ENCODE measurements at regions of chr6 and their contacts with region 1.

Region 1: GRCh38 chr6:3742426-3743344 is 8.8 kb downstream of the PXDC1 start:
- DNase-seq: peak; percentile 73 to 92 (median 85)
- ATAC-seq: peak; percentile 94
- H3K4me3 ChIP-seq: no peak overlapping the region
- H3K4me3 Mint-ChIP-seq: peak overlapping the region; percentile 26 to 73 (median 58)
- H3K27ac ChIP-seq: no peak overlapping the region
- H3K27ac Mint-ChIP-seq: peak overlapping the region in 7 of 9 donors; percentile 2 to 81 (median 38)
- H3K4me1 ChIP-seq: peaks cover 0 to 5% of the 10 kb centered on the region in 2 donors
- H3K4me1 Mint-ChIP-seq: peaks cover 0 to 14% (median 12%) of the 10 kb centered on the region in 7 donors
- H3K27me3 ChIP-seq: no peaks in the 10 kb centered on the region
- H3K27me3 Mint-ChIP-seq: peaks cover 11 to 29% (median 17%) of the 10 kb centered on the region in 5 donors

Region 2: DNA sequence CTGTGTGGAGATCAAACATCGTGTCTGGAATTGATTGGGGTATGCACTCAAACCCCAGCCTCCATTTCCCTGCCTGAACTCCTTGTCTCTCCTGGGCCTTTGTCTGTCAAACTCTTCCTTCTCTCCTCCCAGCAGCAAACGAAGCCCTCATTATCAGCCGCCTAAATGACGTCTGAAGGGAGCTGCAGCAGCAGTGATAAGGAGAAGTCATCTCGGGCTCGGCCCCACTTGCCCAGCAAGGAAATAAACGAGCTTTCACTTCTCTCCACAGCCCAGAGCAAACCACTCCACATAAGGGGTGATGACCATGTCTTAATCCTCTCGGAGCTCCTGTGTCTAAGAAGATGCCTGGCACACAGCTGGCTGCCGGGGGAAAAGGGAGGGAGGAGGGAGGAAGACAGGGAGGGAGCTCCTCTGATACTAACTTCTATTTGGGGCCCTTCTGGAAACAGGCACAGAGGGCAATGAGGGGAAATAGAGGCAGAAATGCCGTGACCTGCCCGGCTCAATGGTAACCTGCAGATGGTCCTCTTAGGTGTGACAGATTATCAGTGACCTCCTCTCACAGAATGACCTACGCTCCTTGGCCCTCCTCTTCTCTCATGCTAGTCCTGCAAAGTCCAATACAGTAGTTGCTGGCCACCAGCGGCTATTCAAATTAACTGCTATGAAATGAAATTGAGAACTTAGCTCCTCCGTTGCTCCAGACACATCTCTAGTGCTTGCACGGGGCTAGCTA is 91.6 kb before region 1 on chr6:
- CTCF ChIA-PET with region 1: no interaction called
- POLR2A ChIA-PET with region 1: no interaction called
- intact Hi-C with region 1: no loop called
- DNase-seq: no peak
- ATAC-seq: no peak
- H3K4me3 ChIP-seq: no peak overlapping the region
- H3K4me3 Mint-ChIP-seq: no peak overlapping the region
- H3K27ac ChIP-seq: no peak overlapping the region
- H3K27ac Mint-ChIP-seq: no peak overlapping the region
- H3K4me1 ChIP-seq: no peaks in the 10 kb centered on the region
- H3K4me1 Mint-ChIP-seq: no peaks in the 10 kb centered on the region
- H3K27me3 ChIP-seq: no peaks in the 10 kb centered on the region
- H3K27me3 Mint-ChIP-seq: peaks cover 0 to 12% (median 6%) of the 10 kb centered on the region in 5 donors

Region 3: GRCh38 chr6:3929281-3929798 is 186.7 kb after region 1 on chr6:
- CTCF ChIA-PET with region 1: interaction called, 21 read pairs
- POLR2A ChIA-PET with region 1: interaction called, 3 read pairs
- intact Hi-C with region 1: loop called in 1 of 2 experiments (anchors 1 kb)
- DNase-seq: no peak
- ATAC-seq: no peak
- H3K4me3 ChIP-seq: no peak overlapping the region
- H3K4me3 Mint-ChIP-seq: no peak overlapping the region
- H3K27ac ChIP-seq: no peak overlapping the region
- H3K27ac Mint-ChIP-seq: no peak overlapping the region
- H3K4me1 ChIP-seq: no peaks in the 10 kb centered on the region
- H3K4me1 Mint-ChIP-seq: no peaks in the 10 kb centered on the region
- H3K27me3 ChIP-seq: no peaks in the 10 kb centered on the region
- H3K27me3 Mint-ChIP-seq: peaks cover 0 to 13% (median 5%) of the 10 kb centered on the region in 5 donors

Region 4: DNA sequence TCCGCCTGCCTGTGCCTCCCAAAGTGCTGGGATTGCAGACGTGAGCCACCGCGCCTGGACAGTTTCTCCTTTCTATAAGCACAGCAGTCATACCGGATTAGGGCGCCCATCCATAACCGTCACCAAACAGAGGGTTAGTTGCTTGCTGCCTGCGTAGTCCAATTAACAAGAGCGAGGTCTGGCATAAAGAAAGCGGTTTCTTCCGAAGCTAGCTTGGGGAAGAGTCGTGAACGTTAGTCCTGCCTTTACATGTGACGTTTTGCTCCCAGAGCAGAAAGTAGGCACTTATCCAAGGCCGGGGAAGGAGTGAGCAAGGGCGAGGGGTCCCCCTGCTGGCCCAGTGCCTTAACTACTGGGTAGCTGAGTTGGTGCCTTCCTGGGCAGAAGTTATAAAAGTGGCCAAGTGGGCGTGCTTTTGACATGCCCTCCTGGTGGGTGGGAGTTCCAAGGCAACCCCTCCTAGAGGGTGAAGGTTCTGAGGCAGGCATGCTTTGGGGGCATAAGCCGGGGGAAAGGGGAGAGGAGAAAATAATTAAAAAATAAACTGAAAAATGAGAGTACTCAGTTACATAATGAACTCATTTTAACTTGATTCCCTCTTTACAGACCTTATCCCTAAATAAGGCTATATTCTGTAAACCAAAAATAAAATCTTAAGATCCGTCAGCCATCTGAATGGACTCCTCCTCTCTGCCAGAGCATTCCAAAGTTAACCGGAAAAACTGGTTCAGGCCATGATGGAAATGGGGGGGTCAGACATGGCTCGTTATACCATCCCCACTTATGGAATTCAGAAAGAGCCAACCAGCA is 248.2 kb after region 1 on chr6:
- CTCF ChIA-PET with region 1: interaction called, 6 read pairs
- POLR2A ChIA-PET with region 1: no interaction called
- intact Hi-C with region 1: loop called (anchors 1 kb)
- DNase-seq: peak; percentile 45 to 72 (median 58)
- ATAC-seq: peak; percentile 96
- H3K4me3 ChIP-seq: no peak overlapping the region
- H3K4me3 Mint-ChIP-seq: peak overlapping the region in 2 of 10 donors; percentile 19 to 29
- H3K27ac ChIP-seq: no peak overlapping the region
- H3K27ac Mint-ChIP-seq: peak overlapping the region in 3 of 9 donors; percentile 3 to 43 (median 19)
- H3K4me1 ChIP-seq: peaks cover 0 to 7% of the 10 kb centered on the region in 2 donors
- H3K4me1 Mint-ChIP-seq: peaks cover 13 to 37% (median 25%) of the 10 kb centered on the region in 7 donors
- H3K27me3 ChIP-seq: no peaks in the 10 kb centered on the region
- H3K27me3 Mint-ChIP-seq: no peaks in the 10 kb centered on the region

Region 5: GRCh38 chr6:4155848-4156466 is 413.3 kb after region 1 on chr6:
- CTCF ChIA-PET with region 1: interaction called, 8 read pairs
- POLR2A ChIA-PET with region 1: no interaction called
- intact Hi-C with region 1: loop called (anchors 1 kb)
- DNase-seq: peak; percentile 33 to 81 (median 71)
- ATAC-seq: peak; percentile 95
- H3K4me3 ChIP-seq: no peak overlapping the region
- H3K4me3 Mint-ChIP-seq: peak overlapping the region in 2 of 10 donors; percentile 20 to 29
- H3K27ac ChIP-seq: no peak overlapping the region
- H3K27ac Mint-ChIP-seq: no peak overlapping the region
- H3K4me1 ChIP-seq: no peaks in the 10 kb centered on the region
- H3K4me1 Mint-ChIP-seq: peaks cover 0 to 24% (median 5%) of the 10 kb centered on the region in 7 donors
- H3K27me3 ChIP-seq: no peaks in the 10 kb centered on the region
- H3K27me3 Mint-ChIP-seq: peaks cover 0 to 12% (median 6%) of the 10 kb centered on the region in 5 donors